ENCODE measurements at regions of chr2 and their contacts with region 1.

Region 1: GRCh38 chr2:68766376-68766845 is 31.8 kb downstream of the ARHGAP25 start:
- DNase-seq: peak; percentile 48 to 89 (median 66)
- ATAC-seq: peak; percentile 71
- H3K4me3 ChIP-seq: peak overlapping the region; percentile 42
- H3K4me3 Mint-ChIP-seq: peak overlapping the region; percentile 84
- H3K27ac ChIP-seq: peak overlapping the region; percentile 89 to 93
- H3K27ac Mint-ChIP-seq: peak overlapping the region; percentile 94
- H3K4me1 ChIP-seq: peaks cover 83% of the 10 kb centered on the region
- H3K4me1 Mint-ChIP-seq: peaks cover 98% of the 10 kb centered on the region
- H3K27me3 ChIP-seq: no peaks in the 10 kb centered on the region
- H3K27me3 Mint-ChIP-seq: no peaks in the 10 kb centered on the region
- CTCF ChIP-seq: no peak

Region 2: GRCh38 chr2:68721482-68722101 is 44.8 kb before region 1 on chr2:
- CTCF ChIA-PET with region 1: interaction called, 3 read pairs
- POLR2A ChIA-PET with region 1: interaction called, 14 read pairs
- intact Hi-C with region 1: no loop called
- DNase-seq: peak in 6 of 14 experiments; percentile 25 to 82 (median 68)
- ATAC-seq: peak; percentile 83
- H3K4me3 ChIP-seq: peak overlapping the region; percentile 19
- H3K4me3 Mint-ChIP-seq: peak overlapping the region; percentile 82
- H3K27ac ChIP-seq: peak overlapping the region; percentile 72 to 76
- H3K27ac Mint-ChIP-seq: peak overlapping the region; percentile 83
- H3K4me1 ChIP-seq: peaks cover 88% of the 10 kb centered on the region
- H3K4me1 Mint-ChIP-seq: peaks cover 96% of the 10 kb centered on the region
- H3K27me3 ChIP-seq: no peaks in the 10 kb centered on the region
- H3K27me3 Mint-ChIP-seq: no peaks in the 10 kb centered on the region
- CTCF ChIP-seq: no peak

Region 3: DNA sequence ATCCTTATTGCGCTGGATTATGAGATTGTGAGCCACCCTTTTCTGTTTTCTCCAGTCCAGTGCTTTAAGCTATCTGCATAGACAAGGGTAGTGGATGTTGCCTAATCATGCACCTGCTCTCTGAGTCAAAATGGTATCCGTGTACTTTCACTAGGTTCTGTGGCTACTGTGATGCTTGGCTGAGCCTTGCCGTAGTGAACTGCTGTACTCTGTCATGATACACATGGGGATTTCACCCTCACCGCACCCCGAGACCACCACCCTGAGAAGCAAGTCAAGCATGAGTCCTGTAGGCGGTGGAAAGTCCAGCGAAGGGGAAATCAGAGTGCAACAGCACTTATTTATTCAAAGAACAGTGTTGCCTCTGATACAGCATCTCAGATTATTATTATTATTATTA is 23.2 kb after region 1 on chr2:
- CTCF ChIA-PET with region 1: interaction called, 4 read pairs
- POLR2A ChIA-PET with region 1: interaction called, 20 read pairs
- intact Hi-C with region 1: loop called in 1 of 2 experiments (anchors 2 kb)
- DNase-seq: peak in 2 of 14 experiments; percentile 28 to 53
- ATAC-seq: peak; percentile 26
- H3K4me3 ChIP-seq: no peak overlapping the region
- H3K4me3 Mint-ChIP-seq: no peak overlapping the region
- H3K27ac ChIP-seq: no peak overlapping the region
- H3K27ac Mint-ChIP-seq: peak overlapping the region; percentile 91
- H3K4me1 ChIP-seq: peaks cover 45% of the 10 kb centered on the region
- H3K4me1 Mint-ChIP-seq: peaks cover 49% of the 10 kb centered on the region
- H3K27me3 ChIP-seq: no peaks in the 10 kb centered on the region
- H3K27me3 Mint-ChIP-seq: no peaks in the 10 kb centered on the region
- CTCF ChIP-seq: no peak

Region 4: GRCh38 chr2:68828887-68829708 is 62.7 kb after region 1 on chr2:
- CTCF ChIA-PET with region 1: no interaction called
- POLR2A ChIA-PET with region 1: interaction called, 24 read pairs
- intact Hi-C with region 1: no loop called
- DNase-seq: peak; percentile 40 to 91 (median 64)
- ATAC-seq: peak; percentile 86
- H3K4me3 ChIP-seq: no peak overlapping the region
- H3K4me3 Mint-ChIP-seq: peak overlapping the region; percentile 68
- H3K27ac ChIP-seq: peak overlapping the region; percentile 69 to 70
- H3K27ac Mint-ChIP-seq: peak overlapping the region; percentile 87
- H3K4me1 ChIP-seq: peaks cover 44% of the 10 kb centered on the region
- H3K4me1 Mint-ChIP-seq: peaks cover 74% of the 10 kb centered on the region
- H3K27me3 ChIP-seq: no peaks in the 10 kb centered on the region
- H3K27me3 Mint-ChIP-seq: no peaks in the 10 kb centered on the region
- CTCF ChIP-seq: no peak

Measured in CD4-positive, alpha-beta T cell (primary cell).